ENCODE measurements at regions of chr9 and their contacts with region 1.

Region 1: GRCh38 chr9:35071814-35072460 is 488 bp downstream of the VCP start:
- DNase-seq: no peak
- H3K4me3 ChIP-seq: peak overlapping the region; percentile 65
- H3K27me3 ChIP-seq: no peaks in the 10 kb centered on the region
- CTCF ChIP-seq: peak; percentile 24; the same call in 1 of the 2 replicates

Region 2: GRCh38 chr9:34741628-34742027 is 330.3 kb before region 1 on chr9:
- CTCF ChIA-PET with region 1: no interaction called
- POLR2A ChIA-PET with region 1: interaction called, 12 read pairs
- DNase-seq: no peak
- H3K4me3 ChIP-seq: no peak overlapping the region
- H3K27me3 ChIP-seq: peaks cover 1% of the 10 kb centered on the region; the same call in 1 of the 2 replicates
- CTCF ChIP-seq: no peak

Region 3: DNA sequence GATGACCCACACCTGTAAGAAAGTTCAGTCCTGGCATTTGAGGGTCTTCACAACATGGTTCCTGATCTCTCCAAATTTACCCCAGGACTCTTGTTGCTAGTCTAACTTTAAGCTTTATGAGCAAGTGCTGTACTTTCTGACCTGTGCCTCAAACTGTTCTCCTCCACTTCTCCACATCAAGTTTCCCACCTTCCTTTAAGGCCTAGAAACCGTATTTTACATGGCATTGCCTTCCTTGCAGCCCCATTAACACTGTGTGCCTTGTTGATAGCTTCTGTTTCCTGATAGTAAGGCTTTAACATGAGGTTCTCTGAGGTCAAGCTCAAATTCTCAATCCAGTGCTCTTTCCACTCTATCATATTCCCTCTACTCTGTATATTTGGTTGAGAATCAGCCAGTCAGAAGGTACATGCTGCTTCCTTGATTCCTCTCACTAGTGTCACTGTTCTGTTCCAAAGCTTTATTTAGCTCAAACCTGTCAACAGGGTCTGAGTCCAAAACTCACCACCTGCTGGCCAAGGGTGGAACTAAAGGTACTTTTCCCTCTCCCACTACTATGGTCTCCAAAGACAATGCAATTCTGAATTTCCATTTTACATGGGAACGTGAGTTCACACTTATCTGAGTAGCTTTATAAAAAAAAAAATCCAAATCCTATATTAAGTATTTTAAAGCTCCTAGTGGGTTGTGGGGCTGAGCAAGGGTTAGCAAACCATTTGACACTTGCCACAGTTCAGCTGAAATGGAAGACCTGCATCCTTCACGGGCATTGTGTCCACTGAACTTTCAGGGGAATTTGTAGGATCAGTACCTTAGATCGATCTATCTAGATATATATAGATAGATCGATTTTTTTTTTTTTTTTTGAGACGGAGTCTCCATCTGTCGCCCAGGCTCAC is 20.6 kb before region 1 on chr9:
- CTCF ChIA-PET with region 1: interaction called, 9 read pairs
- POLR2A ChIA-PET with region 1: interaction called, 11 read pairs
- DNase-seq: no peak
- H3K4me3 ChIP-seq: no peak overlapping the region
- H3K27me3 ChIP-seq: no peaks in the 10 kb centered on the region
- CTCF ChIP-seq: peak; percentile 69

Region 4: DNA sequence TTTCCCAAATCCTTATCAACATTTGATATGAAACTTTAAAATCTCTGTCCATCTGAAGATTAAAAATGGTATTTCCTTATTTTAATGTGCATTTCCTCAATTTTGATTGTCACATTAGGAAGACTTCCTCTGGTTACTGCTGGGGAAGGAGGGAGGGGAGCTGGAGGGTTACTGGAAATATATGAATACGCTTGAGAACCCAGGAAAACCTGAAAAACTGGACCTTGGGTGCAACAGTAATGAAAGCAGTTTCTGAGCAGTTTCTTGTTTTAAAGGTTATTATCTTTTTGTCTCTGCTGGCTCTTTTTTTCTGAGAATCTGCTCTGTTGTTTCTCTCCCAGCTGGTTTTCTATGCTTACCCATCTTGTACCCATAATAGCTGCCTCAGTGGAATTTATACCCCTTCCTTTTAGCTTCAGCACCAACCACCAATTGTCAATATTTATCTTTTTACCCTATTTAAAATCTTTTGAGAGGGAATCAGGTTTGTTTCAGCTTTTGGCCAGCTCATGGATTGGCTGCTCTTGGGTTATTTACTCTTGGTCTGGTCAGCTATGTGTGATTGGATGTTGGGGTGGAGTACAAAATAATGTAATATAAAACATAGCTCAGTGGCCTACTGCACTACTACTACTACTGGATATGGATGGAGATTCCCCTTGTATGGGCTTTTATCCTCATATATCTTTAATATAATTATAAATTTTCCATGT is 157.3 kb after region 1 on chr9:
- CTCF ChIA-PET with region 1: no interaction called
- POLR2A ChIA-PET with region 1: no interaction called
- DNase-seq: no peak
- H3K4me3 ChIP-seq: no peak overlapping the region
- H3K27me3 ChIP-seq: no peaks in the 10 kb centered on the region
- CTCF ChIP-seq: no peak

Region 5: DNA sequence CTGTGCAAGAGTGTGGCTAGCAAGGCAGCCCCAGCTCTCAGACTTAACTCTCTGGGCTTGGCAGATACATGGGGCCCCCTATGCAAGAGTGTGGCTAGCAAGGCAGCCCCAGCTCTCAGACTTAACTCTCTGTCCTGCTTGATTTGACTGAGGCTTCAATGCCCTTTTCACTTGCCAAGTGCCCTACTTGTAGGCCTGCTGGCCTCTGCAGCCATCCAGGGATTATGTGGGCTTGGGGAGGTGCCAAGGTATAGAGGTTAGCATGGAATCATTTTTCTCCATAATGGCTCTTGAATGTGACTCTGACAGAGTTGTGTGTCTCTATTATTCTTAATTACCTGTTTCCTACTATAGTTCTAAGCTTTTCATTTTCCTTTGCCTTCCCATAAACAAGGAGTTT is 302.5 kb after region 1 on chr9:
- CTCF ChIA-PET with region 1: no interaction called
- POLR2A ChIA-PET with region 1: no interaction called
- DNase-seq: no peak
- H3K4me3 ChIP-seq: no peak overlapping the region
- H3K27me3 ChIP-seq: no peaks in the 10 kb centered on the region
- CTCF ChIP-seq: no peak

Region 6: DNA sequence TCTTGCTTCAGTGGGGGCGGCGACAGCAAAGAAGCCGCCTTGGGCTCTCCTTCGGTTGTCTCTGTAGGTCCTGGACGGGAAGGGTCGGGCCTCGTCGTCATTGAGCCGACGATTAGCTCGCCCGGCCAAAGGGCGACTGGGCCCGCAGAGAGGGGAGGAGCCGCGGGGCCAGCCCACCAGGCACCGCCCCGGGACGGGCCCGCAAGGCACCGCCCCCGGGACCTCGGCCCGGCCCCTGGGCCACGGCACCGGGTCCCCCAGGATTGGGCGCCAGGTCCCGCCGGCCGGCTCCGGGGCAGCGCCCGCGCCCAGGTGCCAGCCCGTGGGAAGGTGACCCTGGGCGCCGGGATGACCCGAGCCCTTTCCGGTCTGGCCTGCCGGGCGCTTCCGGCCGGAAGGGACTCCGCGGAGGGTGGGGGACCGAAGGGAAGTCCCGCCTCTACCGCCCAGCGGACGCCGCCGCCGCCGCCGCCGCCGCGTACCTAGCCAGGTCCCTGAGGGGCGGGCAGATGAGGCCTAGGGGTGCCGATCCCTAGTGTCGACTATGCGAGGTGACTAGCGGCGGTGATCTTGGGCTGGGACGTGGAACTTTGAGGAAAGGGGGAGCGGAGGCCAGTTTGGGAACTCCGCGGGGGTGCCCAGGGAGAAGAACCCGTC is 677.0 kb after region 1 on chr9 and contains the starts of genes GBA2 and RGP1:
- CTCF ChIA-PET with region 1: no interaction called
- POLR2A ChIA-PET with region 1: interaction called, 20 read pairs
- DNase-seq: no peak
- H3K4me3 ChIP-seq: peak within 1 kb of the TSS; percentile 65
- H3K27me3 ChIP-seq: no peaks in the 10 kb centered on the region
- CTCF ChIP-seq: no peak
- polyA plus RNA-seq, gene GBA2: 30.3 and 44.1 TPM in 2 replicates
- polyA plus RNA-seq, gene RGP1: 17.4 and 19.7 TPM in 2 replicates

Measured in BJ (cell line).